ENCODE measurements at regions of chr5 and their contacts with region 1.

Region 1: DNA sequence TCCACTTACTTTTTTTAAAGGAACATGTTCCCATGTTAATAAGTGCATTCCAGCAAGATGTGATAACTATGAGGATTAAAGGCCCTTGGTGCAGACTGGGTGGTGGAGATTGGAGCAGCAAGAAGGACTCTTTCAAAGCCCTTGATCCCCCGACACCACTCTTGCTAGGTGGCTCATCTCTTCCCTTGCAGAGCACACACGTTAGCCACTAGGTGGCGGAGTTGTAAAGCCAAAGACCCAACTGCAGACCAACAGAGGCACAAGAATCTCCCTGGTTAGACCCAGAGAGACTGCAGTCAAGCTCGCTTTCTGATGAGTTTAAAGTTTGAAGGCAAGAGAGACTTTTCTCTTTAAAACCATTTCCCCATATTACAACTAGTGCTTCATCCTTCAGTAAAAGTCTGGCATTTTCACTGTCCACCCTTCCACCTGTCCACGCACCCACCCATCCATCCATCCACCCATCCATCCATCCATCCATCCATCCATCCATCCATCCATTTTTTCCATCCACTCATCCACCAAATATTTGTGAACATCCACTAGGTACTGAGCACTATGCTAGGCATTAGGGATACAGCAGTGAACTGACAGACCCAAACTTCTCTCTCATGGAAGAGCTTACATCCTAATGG is 226.9 kb downstream of the MSX2 start:
- DNase-seq: no peak

Region 2: GRCh38 chr5:174982485-174982884 is 31.2 kb after region 1 on chr5:
- intact Hi-C with region 1: no loop called
- DNase-seq: no peak

Region 3: GRCh38 chr5:175444060-175444904 is 493.0 kb after region 1 on chr5 and contains the start of gene DRD1:
- intact Hi-C with region 1: loop called (anchors 2 kb)
- DNase-seq: no peak
- total RNA-seq, gene DRD1: 0.14 to 0.29 TPM

Region 4: GRCh38 chr5:175464074-175464941 is 513.0 kb after region 1 on chr5:
- intact Hi-C with region 1: loop called in 1 of 2 experiments (anchors 5 kb)
- DNase-seq: no peak

Measured in posterior vena cava (tissue), 2 donors.